ENCODE measurements at regions of chr4 and their contacts with region 1.

Region 1: DNA sequence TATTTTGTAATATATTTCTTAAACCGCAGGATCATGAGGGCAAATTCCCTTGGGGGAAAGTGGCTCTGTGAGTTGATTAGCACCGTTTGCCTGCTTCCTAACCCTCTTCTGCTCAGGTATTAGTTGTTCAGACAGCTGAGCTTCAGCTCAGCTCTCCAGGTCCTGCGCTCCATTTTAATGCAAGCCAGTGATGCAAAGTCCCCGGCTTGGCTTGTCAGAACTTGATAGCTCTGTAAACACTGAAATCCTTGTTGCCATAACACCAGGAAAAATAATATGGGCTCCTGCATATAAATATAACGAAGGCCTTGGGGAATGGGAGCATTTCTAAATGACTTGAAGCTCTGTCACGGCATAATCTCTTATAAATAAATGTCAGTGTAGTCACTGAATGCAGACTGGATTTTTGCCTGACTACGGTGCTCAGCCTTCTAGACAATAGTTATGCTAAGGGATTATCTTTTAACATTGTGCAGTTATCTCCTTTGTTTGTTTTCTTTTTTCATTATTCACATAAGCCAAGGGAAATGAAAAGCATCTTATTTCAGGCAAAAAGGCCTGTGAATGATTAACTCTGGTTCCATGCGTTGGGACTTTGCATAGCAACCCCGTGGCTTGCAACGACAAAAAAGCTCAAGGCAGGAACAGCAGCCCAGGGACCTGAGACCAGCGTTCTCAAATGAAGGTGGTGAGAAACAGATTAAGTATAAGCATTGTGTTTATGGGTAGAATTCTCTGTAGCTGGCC is 253.2 kb downstream of the SPRY1 start:
- DNase-seq: peak in 3 of 5 donors; percentile 22 to 40 (median 40)
- ATAC-seq: peak; percentile 44 to 78 (median 68)
- H3K4me3 ChIP-seq: peak overlapping the region in 5 of 12 donors; percentile 6 to 28 (median 20)
- H3K27ac ChIP-seq: peak overlapping the region; percentile 3 to 82 (median 56)
- H3K4me1 ChIP-seq: peaks cover 0 to 47% (median 11%) of the 10 kb centered on the region in 12 donors
- H3K27me3 ChIP-seq: no peaks in the 10 kb centered on the region
- CTCF ChIP-seq: no peak
- POLR2A ChIP-seq: no peak

Region 2: DNA sequence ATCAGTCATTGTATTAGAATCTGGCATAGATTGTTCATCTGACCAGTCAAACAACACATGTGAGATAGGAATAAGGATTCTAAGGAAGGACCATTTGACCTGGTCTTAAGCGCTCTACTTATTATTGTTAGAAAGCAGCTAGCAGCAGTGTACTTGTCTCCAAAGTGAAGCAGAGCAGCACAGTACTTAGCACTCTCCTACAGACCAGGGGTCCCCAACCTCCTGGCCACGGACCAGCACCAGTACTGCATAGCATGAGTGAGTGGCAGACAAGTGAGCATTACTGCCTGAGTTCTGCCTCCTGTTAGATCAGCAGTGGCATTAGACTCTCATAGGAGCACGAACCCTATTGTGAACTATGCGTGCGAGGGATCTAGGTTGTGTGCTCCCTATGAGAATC is 389.2 kb before region 1 on chr4:
- intact Hi-C with region 1: no loop called
- DNase-seq: no peak
- ATAC-seq: peak; percentile 37 to 62 (median 48)
- H3K4me3 ChIP-seq: no peak overlapping the region
- H3K27ac ChIP-seq: peak overlapping the region in 8 of 12 donors; percentile 25 to 69 (median 48)
- H3K4me1 ChIP-seq: peaks cover 0 to 33% (median 12%) of the 10 kb centered on the region in 12 donors
- H3K27me3 ChIP-seq: no peaks in the 10 kb centered on the region
- CTCF ChIP-seq: no peak
- POLR2A ChIP-seq: no peak

Region 3: GRCh38 chr4:123564758-123565346 is 85.0 kb before region 1 on chr4:
- intact Hi-C with region 1: loop called in 3 of 10 experiments (anchors 5 to 10 kb)
- DNase-seq: peak in 3 of 5 donors; percentile 34 to 60 (median 46)
- ATAC-seq: peak; percentile 86 to 95 (median 92)
- H3K4me3 ChIP-seq: no peak overlapping the region
- H3K27ac ChIP-seq: no peak overlapping the region
- H3K4me1 ChIP-seq: peaks cover 0 to 14% (median 5%) of the 10 kb centered on the region in 12 donors
- H3K27me3 ChIP-seq: no peaks in the 10 kb centered on the region
- CTCF ChIP-seq: peak; percentile 63 to 87 (median 76)
- POLR2A ChIP-seq: no peak

Region 4: GRCh38 chr4:123573866-123574508 is 75.8 kb before region 1 on chr4:
- intact Hi-C with region 1: loop called in 2 of 10 experiments (anchors 5 to 10 kb)
- DNase-seq: no peak
- ATAC-seq: no peak
- H3K4me3 ChIP-seq: no peak overlapping the region
- H3K27ac ChIP-seq: no peak overlapping the region
- H3K4me1 ChIP-seq: peaks cover 0 to 9% (median 0%) of the 10 kb centered on the region in 12 donors
- H3K27me3 ChIP-seq: no peaks in the 10 kb centered on the region
- CTCF ChIP-seq: no peak
- POLR2A ChIP-seq: no peak

Region 5: GRCh38 chr4:123618606-123619005 is 31.2 kb before region 1 on chr4:
- intact Hi-C with region 1: loop called in 1 of 10 experiments (anchors 2 kb)
- DNase-seq: no peak
- ATAC-seq: no peak
- H3K4me3 ChIP-seq: no peak overlapping the region
- H3K27ac ChIP-seq: peak overlapping the region in 1 of 12 donors; percentile 65
- H3K4me1 ChIP-seq: peaks cover 0 to 43% (median 27%) of the 10 kb centered on the region in 12 donors
- H3K27me3 ChIP-seq: no peaks in the 10 kb centered on the region
- CTCF ChIP-seq: no peak
- POLR2A ChIP-seq: no peak

Region 6: DNA sequence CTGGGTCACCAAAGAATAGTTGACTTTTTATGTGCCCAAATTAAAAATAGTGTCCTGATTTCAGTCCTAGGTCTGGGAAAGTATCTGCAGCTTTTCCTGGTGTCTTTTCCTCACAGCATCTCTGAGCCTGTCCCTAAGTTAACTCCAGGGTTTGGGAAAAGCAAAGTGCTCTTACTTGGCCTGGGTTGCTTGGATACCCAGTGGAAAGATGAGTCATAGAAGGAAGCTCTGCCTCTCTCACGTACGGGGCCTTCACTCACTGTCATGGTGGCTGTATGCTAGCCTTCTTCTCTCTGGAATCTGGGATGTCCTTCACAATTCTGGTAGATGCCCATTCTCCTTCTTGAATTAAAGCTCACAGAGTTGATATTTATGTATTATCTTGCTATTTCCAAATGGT is 455.4 kb after region 1 on chr4:
- intact Hi-C with region 1: loop called in 2 of 10 experiments (anchors 10 kb)
- DNase-seq: no peak
- ATAC-seq: peak in 1 of 4 donors; percentile 50
- H3K4me3 ChIP-seq: no peak overlapping the region
- H3K27ac ChIP-seq: no peak overlapping the region
- H3K4me1 ChIP-seq: no peaks in the 10 kb centered on the region
- H3K27me3 ChIP-seq: no peaks in the 10 kb centered on the region
- CTCF ChIP-seq: no peak
- POLR2A ChIP-seq: no peak

Measured in heart left ventricle (tissue), 16 donors.